ENCODE measurements at regions of chr12 and their contacts with region 1.

Region 1: GRCh38 chr12:25014961-25015360 is 66.1 kb upstream of the BCAT1 start:
- DNase-seq: no peak
- ATAC-seq: no peak
- H3K4me3 ChIP-seq: no peak overlapping the region
- H3K4me3 Mint-ChIP-seq: no peak overlapping the region
- H3K27ac ChIP-seq: no peak overlapping the region
- H3K27ac Mint-ChIP-seq: no peak overlapping the region
- H3K4me1 ChIP-seq: no peaks in the 10 kb centered on the region
- H3K4me1 Mint-ChIP-seq: no peaks in the 10 kb centered on the region
- H3K27me3 ChIP-seq: peaks cover 0 to 3% of the 10 kb centered on the region in 2 experiments
- H3K27me3 Mint-ChIP-seq: no peaks in the 10 kb centered on the region
- CTCF ChIP-seq: no peak

Region 2: DNA sequence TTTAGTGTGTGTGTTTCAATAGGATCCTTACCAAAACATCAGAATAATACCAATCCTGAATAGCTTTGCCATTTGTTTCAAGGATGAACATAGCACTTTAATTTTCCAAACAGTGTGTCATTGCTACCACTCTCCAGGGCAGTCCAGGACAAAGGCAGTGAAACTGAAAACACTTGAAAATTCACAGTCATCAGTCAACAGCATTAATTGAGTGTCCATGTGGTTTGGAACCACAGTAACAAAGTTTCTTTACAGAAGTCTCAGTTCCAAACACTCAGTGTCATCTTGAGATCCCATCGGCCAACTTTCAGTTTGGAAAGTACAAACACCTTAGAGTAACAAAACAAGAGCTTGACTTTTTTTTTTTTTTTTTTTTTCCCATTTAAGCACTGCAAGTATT is 837.1 kb before region 1 on chr12:
- CTCF ChIA-PET with region 1: no interaction called
- POLR2A ChIA-PET with region 1: no interaction called
- intact Hi-C with region 1: no loop called
- DNase-seq: no peak
- ATAC-seq: no peak
- H3K4me3 ChIP-seq: no peak overlapping the region
- H3K4me3 Mint-ChIP-seq: no peak overlapping the region
- H3K27ac ChIP-seq: no peak overlapping the region
- H3K27ac Mint-ChIP-seq: no peak overlapping the region
- H3K4me1 ChIP-seq: no peaks in the 10 kb centered on the region
- H3K4me1 Mint-ChIP-seq: no peaks in the 10 kb centered on the region
- H3K27me3 ChIP-seq: no peaks in the 10 kb centered on the region
- H3K27me3 Mint-ChIP-seq: no peaks in the 10 kb centered on the region
- CTCF ChIP-seq: no peak

Region 3: DNA sequence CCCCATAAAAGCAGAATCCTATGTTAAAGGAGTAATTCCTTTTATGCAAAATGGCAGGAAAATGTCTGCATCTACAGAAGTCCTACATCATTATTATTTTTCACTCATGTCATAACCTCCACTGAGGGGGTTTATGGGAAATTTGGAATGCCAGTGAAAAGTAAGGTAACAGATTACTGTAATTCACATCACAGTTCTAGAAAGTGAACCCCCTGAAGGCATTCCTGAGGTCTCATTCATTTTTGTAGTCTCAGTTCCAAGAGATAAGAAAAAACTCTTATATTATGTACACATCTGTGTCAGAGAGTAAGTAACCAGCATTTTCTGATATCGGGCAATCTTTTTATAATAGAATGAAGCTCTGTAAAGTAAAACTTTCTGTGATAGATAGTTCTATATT is 37.2 kb before region 1 on chr12:
- CTCF ChIA-PET with region 1: no interaction called
- POLR2A ChIA-PET with region 1: no interaction called
- intact Hi-C with region 1: loop called in 1 of 2 experiments (anchors 1 kb)
- DNase-seq: no peak
- ATAC-seq: no peak
- H3K4me3 ChIP-seq: no peak overlapping the region
- H3K4me3 Mint-ChIP-seq: no peak overlapping the region
- H3K27ac ChIP-seq: no peak overlapping the region
- H3K27ac Mint-ChIP-seq: no peak overlapping the region
- H3K4me1 ChIP-seq: no peaks in the 10 kb centered on the region
- H3K4me1 Mint-ChIP-seq: no peaks in the 10 kb centered on the region
- H3K27me3 ChIP-seq: no peaks in the 10 kb centered on the region
- H3K27me3 Mint-ChIP-seq: peaks cover 5% of the 10 kb centered on the region
- CTCF ChIP-seq: no peak